A549 (cell line): ENCODE measurements at regions of chr2 and their contacts with region 1.

Region 1: GRCh38 chr2:121071034-121071504 is 213.9 kb downstream of the TFCP2L1 start:
- DNase-seq: peak; percentile 53 to 84
- ATAC-seq: peak; percentile 52 to 80
- H3K4me3 ChIP-seq: no peak overlapping the region
- H3K27ac ChIP-seq: peak overlapping the region; percentile 79 to 92
- H3K4me1 ChIP-seq: peaks cover 36% of the 10 kb centered on the region
- CTCF ChIP-seq: peak; percentile 97
- EP300 ChIP-seq: no peak
- POLR2A ChIP-seq: no peak
- RAD21 ChIP-seq: peak; percentile 95 to 98

Region 2: GRCh38 chr2:120735746-120736170 is 335.3 kb before region 1 on chr2 and contains the start of gene GLI2:
- CTCF ChIA-PET with region 1: interaction called, 19 read pairs
- POLR2A ChIA-PET with region 1: interaction called, 25 read pairs
- DNase-seq: peak; percentile 61 to 89
- ATAC-seq: peak; percentile 69 to 75
- H3K4me3 ChIP-seq: peak within 1 kb of the TSS; percentile 73
- H3K27ac ChIP-seq: peak within 1 kb of the TSS; percentile 93 to 98
- H3K4me1 ChIP-seq: peaks cover 39% of the 10 kb centered on the region
- CTCF ChIP-seq: peak; percentile 81
- EP300 ChIP-seq: no peak
- POLR2A ChIP-seq: peak; percentile 40
- RAD21 ChIP-seq: peak; percentile 45 to 80
- polyA plus RNA-seq, gene GLI2: 5.6 and 7.5 TPM in 2 replicates

Region 3: GRCh38 chr2:120914839-120915521 is 156.1 kb before region 1 on chr2:
- CTCF ChIA-PET with region 1: interaction called, 12 read pairs
- POLR2A ChIA-PET with region 1: interaction called, 23 read pairs
- DNase-seq: peak; percentile 51 to 90
- ATAC-seq: peak; percentile 30 to 46
- H3K4me3 ChIP-seq: no peak overlapping the region
- H3K27ac ChIP-seq: peak overlapping the region; percentile 95 to 98
- H3K4me1 ChIP-seq: peaks cover 83% of the 10 kb centered on the region
- CTCF ChIP-seq: no peak
- EP300 ChIP-seq: peak; percentile 83 to 96; a peak in 4 of 5 replicates
- POLR2A ChIP-seq: 0 out of 2 replicates have a peak, but pooled peaks have one; percentile 18
- RAD21 ChIP-seq: peak; percentile 7 to 49

Region 4: DNA sequence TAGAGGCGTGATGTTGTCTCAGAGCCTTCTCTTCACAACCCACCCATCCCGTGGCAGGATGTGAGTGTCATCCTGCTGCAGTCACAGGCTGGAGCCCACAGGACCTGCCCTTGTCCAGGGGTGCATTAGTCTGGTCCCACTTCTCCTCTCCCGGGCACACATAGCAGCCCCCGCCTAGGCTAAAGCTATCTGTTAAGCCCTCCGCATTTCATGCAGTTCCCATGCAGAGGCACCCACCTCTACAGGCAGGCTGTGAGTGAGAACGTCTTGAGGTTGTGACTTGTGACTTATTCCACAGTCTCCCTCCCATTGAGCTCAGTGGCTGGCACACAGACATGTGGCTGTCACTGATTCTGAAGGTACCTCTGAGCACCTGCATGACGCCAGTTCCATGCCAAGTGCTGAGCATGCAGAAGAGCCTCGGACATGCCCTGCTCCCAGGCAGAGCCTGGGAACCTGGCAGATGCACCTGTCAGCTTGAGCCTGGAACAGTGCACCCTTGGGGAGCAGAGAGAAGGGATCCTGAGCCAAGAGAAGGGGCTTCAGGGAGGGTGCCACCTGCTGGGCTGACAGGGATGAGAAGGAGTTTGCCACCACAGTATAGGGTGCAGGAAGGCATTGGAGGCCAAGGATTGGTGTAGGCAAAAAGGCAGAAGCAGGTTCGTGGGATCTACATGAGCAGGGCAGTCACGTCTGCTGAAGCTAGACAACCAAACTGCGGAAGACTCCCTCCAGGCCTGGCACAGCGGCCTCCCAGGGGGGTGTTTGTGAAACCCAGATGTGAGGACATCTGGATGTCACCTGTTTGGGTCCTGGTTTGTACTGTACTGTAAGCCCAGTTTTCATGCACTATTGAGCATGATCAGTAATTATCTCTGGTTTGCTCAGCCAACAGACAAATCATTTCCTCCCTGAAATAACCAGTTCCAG is 121.8 kb before region 1 on chr2:
- CTCF ChIA-PET with region 1: interaction called, 13 read pairs
- POLR2A ChIA-PET with region 1: interaction called, 5 read pairs
- DNase-seq: peak; percentile 33 to 53
- ATAC-seq: peak; percentile 55 to 79; a peak in 5 of 6 replicates
- H3K4me3 ChIP-seq: no peak overlapping the region
- H3K27ac ChIP-seq: peak overlapping the region; percentile 66 to 97
- H3K4me1 ChIP-seq: peaks cover 63% of the 10 kb centered on the region
- CTCF ChIP-seq: peak; percentile 55
- EP300 ChIP-seq: no peak
- POLR2A ChIP-seq: no peak
- RAD21 ChIP-seq: peak; percentile 49 to 55

Region 5: DNA sequence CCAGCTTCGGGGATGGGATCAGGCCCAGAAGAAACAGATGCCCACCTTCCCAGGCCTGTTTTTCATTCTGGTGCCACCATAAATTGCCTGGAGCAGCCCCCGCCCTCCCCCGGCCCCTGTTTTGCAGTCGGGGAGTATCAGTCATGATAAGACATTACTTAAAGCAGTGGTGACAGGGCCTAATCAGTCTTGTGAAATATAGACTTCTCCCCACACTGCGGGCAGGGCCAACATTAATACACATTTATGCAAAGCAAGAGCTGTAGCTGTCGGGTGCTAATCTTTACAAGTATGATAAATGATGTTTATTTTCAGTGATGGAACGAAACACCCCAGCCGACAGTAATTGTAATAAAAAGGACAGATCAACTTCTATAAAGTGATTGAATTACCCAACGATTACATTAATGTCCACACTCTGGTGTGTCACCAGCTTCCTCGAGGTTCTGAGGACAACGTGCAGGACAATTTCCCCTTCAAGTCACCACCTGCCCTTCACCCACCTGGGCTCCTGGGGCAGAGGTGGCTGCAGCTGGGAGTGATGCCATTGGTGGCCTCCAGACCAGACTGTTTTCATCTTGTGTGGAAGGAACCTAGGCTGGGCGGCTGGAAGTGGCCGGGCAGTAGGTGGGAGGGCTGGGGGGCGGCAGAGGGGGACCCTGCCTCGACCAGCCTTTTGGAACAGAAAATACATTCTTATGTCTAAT is 12.1 kb before region 1 on chr2:
- CTCF ChIA-PET with region 1: interaction called, 45 read pairs
- POLR2A ChIA-PET with region 1: interaction called, 3 read pairs
- DNase-seq: no peak
- ATAC-seq: no peak
- H3K4me3 ChIP-seq: no peak overlapping the region
- H3K27ac ChIP-seq: peak overlapping the region in 1 of 2 experiments; percentile 78; a peak in 2 of 6 replicates
- H3K4me1 ChIP-seq: peaks cover 7% of the 10 kb centered on the region; the same call in 2 of the 3 replicates
- CTCF ChIP-seq: no peak
- EP300 ChIP-seq: no peak
- POLR2A ChIP-seq: no peak
- RAD21 ChIP-seq: no peak